Left cardiac atrium (tissue), 4 donors: ENCODE measurements at regions of chr2 and their contacts with region 1.

Region 1: DNA sequence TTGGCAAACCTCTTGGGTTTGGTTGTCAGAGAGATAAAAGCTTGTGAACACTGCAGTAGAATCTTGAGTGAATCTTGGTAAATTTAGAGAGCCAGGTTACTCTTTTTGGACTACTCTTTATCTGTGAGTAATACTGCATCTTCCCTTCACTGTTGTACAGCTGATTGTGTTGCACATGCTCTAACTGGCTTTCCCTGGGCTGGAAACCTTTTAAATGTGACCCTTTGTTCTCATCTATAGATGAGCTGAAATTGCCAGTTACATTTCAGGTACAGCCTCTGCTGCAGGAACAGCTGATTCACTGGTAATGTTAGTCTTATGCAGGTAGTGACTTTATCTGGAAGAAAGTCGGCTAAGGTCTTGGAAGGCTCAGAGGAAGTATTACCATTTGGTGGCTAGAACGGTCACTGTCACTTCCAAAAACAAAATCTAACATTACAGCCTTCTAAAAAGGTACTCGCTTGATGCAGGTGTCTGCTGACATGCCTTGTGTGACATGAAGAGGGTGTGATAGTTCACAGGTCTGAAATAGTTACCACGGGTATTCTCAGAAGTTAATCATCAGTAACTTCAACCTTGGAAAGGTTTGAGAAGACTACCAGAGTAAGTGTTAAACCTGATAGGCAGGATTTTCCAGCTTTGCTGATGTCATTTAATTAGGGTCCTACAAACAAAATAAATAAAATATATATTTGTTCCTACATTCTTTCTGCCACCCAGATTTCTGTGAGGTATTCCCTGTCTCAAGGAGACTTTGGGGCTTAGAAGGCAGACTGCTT is 851.1 kb downstream of the SLC4A3 start:
- DNase-seq: no peak
- ATAC-seq: peak; percentile 59 to 70

Region 2: GRCh38 chr2:220394433-220394832 is 84.1 kb before region 1 on chr2:
- intact Hi-C with region 1: loop called in 1 of 2 experiments (anchors 2 kb)
- DNase-seq: peak; percentile 75
- ATAC-seq: peak; percentile 46 to 72

Region 3: GRCh38 chr2:220417503-220417902 is 61.0 kb before region 1 on chr2:
- intact Hi-C with region 1: no loop called
- DNase-seq: no peak
- ATAC-seq: no peak